ENCODE measurements at regions of chr19 and their contacts with region 1.

Region 1: DNA sequence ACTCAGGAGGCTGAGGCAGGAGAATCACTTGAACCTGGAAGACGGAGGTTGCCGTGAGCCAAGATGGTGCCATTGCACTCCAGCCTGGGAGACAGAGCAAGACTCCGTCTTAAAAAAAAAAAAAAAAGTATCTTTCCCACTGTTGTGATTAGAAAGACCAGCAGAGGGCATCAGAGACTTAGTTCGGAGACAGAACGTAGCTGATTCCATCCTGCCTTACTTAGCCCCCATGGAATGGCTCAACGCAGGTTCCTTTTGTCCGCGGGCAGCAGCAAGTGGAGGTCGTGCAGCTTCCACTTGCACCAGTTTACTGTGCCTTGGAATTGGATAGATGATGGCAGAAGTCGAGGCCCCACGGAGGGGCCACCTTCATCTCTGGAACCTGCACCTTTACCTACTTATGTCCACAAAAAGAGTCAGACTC is 8.1 kb downstream of the TIMM29 start:
- DNase-seq: no peak
- H3K4me3 ChIP-seq: peak overlapping the region in 1 of 4 donors; percentile 24
- H3K27ac ChIP-seq: peak overlapping the region; percentile 40 to 61 (median 50)
- H3K4me1 ChIP-seq: peaks cover 0 to 9% (median under 1%) of the 10 kb centered on the region in 4 donors
- H3K27me3 ChIP-seq: no peaks in the 10 kb centered on the region
- CTCF ChIP-seq: peak; percentile 50 to 76 (median 60)
- EP300 ChIP-seq: no peak
- POLR2A ChIP-seq: no peak

Region 2: GRCh38 chr19:10861103-10861651 is 75.5 kb before region 1 on chr19:
- intact Hi-C with region 1: no loop called
- DNase-seq: no peak
- H3K4me3 ChIP-seq: no peak overlapping the region
- H3K27ac ChIP-seq: no peak overlapping the region
- H3K4me1 ChIP-seq: peaks cover 0 to 7% (median 2%) of the 10 kb centered on the region in 4 donors
- H3K27me3 ChIP-seq: no peaks in the 10 kb centered on the region
- CTCF ChIP-seq: no peak
- EP300 ChIP-seq: no peak
- POLR2A ChIP-seq: no peak

Region 3: DNA sequence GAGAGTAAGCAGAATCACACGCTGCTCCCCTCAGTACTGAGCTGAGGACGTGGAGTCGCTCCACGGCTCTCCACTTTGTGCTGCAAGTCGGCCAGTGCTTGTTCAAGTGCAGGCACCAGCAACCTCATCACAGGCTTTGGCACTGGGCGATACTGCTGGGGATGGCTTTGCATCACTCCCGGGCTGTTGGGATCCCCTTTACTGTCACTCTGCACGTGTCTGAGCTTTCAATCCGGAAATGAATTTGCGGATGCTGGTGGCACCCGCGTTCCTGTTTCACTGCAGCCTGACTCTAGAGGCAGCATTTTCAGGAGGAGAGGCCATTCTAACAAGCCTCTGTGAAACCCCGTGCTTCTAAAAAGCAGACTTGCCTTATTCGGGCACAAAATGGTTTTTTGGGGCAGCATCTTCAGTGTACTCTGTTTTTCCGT is 43.3 kb after region 1 on chr19:
- intact Hi-C with region 1: loop called (anchors 5 kb)
- DNase-seq: no peak
- H3K4me3 ChIP-seq: no peak overlapping the region
- H3K27ac ChIP-seq: peak overlapping the region in 1 of 4 donors; percentile 14
- H3K4me1 ChIP-seq: peaks cover 0 to 28% (median 24%) of the 10 kb centered on the region in 4 donors
- H3K27me3 ChIP-seq: no peaks in the 10 kb centered on the region
- CTCF ChIP-seq: no peak
- EP300 ChIP-seq: no peak
- POLR2A ChIP-seq: no peak

Region 4: DNA sequence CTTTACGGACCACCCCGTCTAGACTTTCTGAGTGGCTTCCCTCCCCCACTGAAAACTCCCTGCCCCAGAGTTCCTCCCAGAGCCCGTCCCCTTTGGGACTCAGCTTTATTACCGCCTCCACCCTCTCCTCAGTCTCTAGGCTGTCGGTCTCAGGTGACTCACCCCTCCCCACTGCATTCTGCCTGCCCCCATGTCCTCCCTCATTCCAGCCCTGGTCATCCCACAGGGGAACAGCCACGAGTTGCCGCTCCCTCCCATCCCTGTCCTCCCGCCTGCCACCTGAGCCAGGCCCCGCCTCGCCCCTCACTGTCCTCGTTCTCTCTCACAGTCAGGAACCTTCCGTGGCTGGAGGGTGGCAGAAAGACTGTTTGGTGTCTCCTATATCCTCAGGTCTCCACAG is 81.5 kb after region 1 on chr19:
- intact Hi-C with region 1: no loop called
- DNase-seq: no peak
- H3K4me3 ChIP-seq: no peak overlapping the region
- H3K27ac ChIP-seq: no peak overlapping the region
- H3K4me1 ChIP-seq: no peaks in the 10 kb centered on the region
- H3K27me3 ChIP-seq: no peaks in the 10 kb centered on the region
- CTCF ChIP-seq: no peak
- EP300 ChIP-seq: no peak
- POLR2A ChIP-seq: no peak

Region 5: DNA sequence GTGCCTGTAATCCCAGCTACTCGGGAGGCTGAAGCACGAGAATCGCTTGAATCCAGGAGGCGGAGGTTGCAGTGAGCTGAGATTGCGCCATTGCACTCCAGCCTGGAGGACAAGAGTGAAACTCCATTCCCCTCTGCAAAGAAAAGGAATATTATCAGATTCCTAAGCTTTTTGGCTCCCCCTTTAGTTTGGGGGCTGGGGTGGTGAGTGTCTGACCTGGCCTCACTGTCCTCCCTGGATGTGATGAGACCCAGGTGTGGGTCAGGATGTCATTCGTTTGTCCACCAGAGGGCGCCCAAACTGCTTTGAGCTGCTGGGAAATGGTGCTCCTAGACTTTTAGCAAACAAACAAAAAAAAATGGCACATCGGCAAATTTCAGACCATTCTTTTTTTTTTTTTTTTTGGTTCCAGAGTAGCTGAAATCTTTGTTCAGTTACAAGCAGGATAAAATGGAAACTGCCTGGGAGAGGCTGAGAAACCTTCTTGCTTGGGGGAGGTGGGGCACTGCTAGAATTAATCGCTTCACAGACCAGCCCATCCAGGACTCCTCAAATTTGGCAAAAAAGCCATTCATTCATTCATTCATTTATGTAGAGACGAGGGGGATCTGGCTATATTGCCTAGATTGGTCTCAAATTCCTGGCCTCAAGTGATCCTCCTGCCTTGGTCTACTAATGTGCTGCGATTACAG is 189.5 kb after region 1 on chr19:
- intact Hi-C with region 1: loop called (anchors 5 kb)
- DNase-seq: peak; percentile 94
- H3K4me3 ChIP-seq: no peak overlapping the region
- H3K27ac ChIP-seq: peak overlapping the region in 2 of 4 donors; percentile 28 to 44
- H3K4me1 ChIP-seq: peaks cover 0 to 16% (median 10%) of the 10 kb centered on the region in 4 donors
- H3K27me3 ChIP-seq: no peaks in the 10 kb centered on the region
- CTCF ChIP-seq: peak; percentile 68 to 79 (median 75)
- EP300 ChIP-seq: no peak
- POLR2A ChIP-seq: no peak